GM12878 (cell line): ENCODE measurements at regions of chr10 and their contacts with region 1.

Region 1: GRCh38 chr10:95374597-95375209 is 83.9 kb upstream of the PDLIM1 start:
- DNase-seq: no peak
- ATAC-seq: peak; percentile 99
- H3K4me3 ChIP-seq: no peak overlapping the region
- H3K27ac ChIP-seq: no peak overlapping the region
- H3K4me1 ChIP-seq: peaks cover 16% of the 10 kb centered on the region
- H3K27me3 ChIP-seq: peaks cover 0 to 3% of the 10 kb centered on the region in 2 experiments; a peak in 1 of 4 replicates
- CTCF ChIP-seq: peak; percentile 94 to 96 (median 96)
- EP300 ChIP-seq: no peak
- POLR2A ChIP-seq: no peak
- RAD21 ChIP-seq: peak; percentile 97

Region 2: DNA sequence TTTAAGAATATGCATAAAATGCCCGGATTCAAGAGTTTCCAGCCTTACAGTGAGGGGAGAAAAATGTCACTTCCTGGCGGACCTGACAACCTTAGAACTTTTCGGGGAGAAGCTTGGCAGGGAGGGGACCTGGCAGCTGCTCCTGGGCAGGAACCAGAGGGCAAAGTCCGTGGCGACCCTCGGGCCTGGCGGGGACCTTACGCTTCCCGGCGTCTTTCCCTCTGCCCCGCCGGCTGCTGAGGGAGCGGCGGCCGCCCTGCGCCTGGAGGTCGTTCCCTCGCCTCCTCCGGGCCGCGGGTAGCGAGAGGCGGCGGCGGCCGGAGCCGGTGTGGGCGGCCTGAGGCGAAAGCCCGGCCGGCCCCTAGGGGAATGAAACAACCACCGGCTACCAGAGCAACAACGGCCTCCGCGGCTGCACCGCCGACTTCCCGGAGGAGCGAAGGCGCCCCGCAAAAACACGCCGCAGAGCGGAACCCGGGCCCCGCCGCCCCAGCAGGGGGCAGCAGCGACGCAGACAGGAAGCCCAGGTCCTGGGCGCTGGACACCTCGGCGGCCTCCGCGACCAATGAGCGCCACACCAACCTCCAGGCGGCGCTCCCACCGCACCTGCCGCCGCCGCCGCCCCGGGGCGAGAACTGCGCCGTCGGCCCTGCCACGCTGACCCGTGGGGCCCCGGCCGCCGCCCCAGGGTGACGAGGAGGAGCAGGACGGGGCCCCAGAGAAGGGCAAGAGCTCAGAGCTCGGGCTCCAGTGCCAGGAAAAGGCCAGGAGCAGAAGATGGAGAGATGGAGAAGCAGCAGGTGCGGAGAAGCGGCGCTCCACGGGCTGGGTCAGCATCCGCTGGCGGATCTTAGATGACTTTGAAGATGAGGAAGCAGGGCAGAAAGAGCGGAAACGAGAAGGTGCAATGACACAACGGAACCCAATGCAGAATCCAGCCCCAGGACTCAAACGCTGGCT is 191.2 kb before region 1 on chr10:
- CTCF ChIA-PET with region 1: interaction called, 13 read pairs
- POLR2A ChIA-PET with region 1: no interaction called
- RAD21 ChIA-PET with region 1: interaction called, 3 read pairs
- SMC1A ChIA-PET with region 1: interaction called, 4 read pairs
- in situ Hi-C with region 1: no loop called
- intact Hi-C with region 1: no loop called
- DNase-seq: peak; percentile 27
- ATAC-seq: peak; percentile 99
- H3K4me3 ChIP-seq: peak overlapping the region; percentile 69
- H3K27ac ChIP-seq: no peak overlapping the region
- H3K4me1 ChIP-seq: no peaks in the 10 kb centered on the region
- H3K27me3 ChIP-seq: no peaks in the 10 kb centered on the region
- CTCF ChIP-seq: peak; percentile 84 to 98 (median 92)
- EP300 ChIP-seq: 0 out of 4 replicates have a peak, but pooled peaks of 1 of the 2 experiments have one; percentile 17
- POLR2A ChIP-seq: peak; percentile 69
- RAD21 ChIP-seq: peak; percentile 67

Region 3: DNA sequence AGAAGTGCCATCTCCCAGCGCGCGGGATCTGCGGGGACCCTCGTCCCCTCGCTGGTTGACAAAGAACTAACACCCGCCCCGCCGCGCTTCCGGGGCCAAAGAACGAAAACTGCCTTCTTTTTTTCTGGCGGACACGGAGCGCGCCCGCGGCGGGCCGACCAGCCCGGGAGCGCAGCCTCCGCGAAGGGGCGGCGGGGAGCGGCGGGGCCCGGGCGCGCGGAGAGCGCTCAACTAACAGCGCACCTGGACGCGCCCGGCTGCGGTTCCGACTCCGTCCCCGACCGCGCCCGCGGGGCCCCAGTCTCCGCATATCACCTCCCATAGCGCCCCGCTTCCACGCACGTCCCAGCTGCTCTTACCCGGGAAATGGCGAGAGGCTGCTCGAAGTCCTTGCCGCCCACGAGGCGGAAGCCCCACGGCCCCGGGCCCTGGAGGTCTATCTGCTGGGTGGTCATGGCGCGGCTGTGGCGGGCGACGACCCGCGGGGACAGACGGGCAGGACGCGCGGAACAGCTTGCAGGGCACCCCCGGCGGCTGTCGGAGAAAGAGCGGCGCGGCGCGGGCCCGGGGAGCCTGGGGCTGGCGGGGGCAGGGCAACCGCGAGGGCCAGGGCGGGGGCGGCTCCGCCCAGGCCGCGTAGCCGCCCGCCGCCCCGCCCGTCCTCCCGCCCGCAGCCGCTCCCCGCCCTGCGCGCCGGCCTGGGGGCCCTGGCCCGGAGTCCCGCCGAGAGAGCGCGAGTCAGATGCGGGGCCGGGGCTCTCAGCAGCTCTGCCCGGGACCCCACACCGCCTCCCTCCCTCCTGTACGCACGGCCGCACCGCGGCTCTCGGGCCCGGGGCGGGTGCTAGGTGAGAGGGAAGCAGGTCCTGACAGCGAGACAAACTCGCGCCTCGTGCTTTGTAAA is 84.0 kb before region 1 on chr10 and contains the start of gene PDLIM1:
- CTCF ChIA-PET with region 1: interaction called, 9 read pairs
- POLR2A ChIA-PET with region 1: interaction called, 9 read pairs
- RAD21 ChIA-PET with region 1: interaction called, 7 read pairs
- SMC1A ChIA-PET with region 1: interaction called, 14 read pairs
- in situ Hi-C with region 1: no loop called
- intact Hi-C with region 1: no loop called
- DNase-seq: no peak
- ATAC-seq: peak; percentile 55
- H3K4me3 ChIP-seq: peak within 1 kb of the TSS; percentile 97
- H3K27ac ChIP-seq: peak within 1 kb of the TSS; percentile 98
- H3K4me1 ChIP-seq: peaks cover 47% of the 10 kb centered on the region
- H3K27me3 ChIP-seq: no peaks in the 10 kb centered on the region
- CTCF ChIP-seq: peak; percentile 21 to 30 (median 27); a peak in 5 of 6 replicates
- EP300 ChIP-seq: no peak
- POLR2A ChIP-seq: peak; percentile 96
- RAD21 ChIP-seq: no peak
- polyA plus RNA-seq, gene PDLIM1: 133 to 338 TPM

Region 4: GRCh38 chr10:95334805-95335144 is 39.9 kb before region 1 on chr10:
- CTCF ChIA-PET with region 1: no interaction called
- POLR2A ChIA-PET with region 1: no interaction called
- RAD21 ChIA-PET with region 1: no interaction called
- SMC1A ChIA-PET with region 1: no interaction called
- in situ Hi-C with region 1: no loop called
- intact Hi-C with region 1: no loop called
- DNase-seq: no peak
- ATAC-seq: no peak
- H3K4me3 ChIP-seq: no peak overlapping the region
- H3K27ac ChIP-seq: no peak overlapping the region
- H3K4me1 ChIP-seq: peaks cover 4% of the 10 kb centered on the region; the same call in 1 of the 2 replicates
- H3K27me3 ChIP-seq: no peaks in the 10 kb centered on the region
- CTCF ChIP-seq: no peak
- EP300 ChIP-seq: no peak
- POLR2A ChIP-seq: no peak
- RAD21 ChIP-seq: no peak

Region 5: DNA sequence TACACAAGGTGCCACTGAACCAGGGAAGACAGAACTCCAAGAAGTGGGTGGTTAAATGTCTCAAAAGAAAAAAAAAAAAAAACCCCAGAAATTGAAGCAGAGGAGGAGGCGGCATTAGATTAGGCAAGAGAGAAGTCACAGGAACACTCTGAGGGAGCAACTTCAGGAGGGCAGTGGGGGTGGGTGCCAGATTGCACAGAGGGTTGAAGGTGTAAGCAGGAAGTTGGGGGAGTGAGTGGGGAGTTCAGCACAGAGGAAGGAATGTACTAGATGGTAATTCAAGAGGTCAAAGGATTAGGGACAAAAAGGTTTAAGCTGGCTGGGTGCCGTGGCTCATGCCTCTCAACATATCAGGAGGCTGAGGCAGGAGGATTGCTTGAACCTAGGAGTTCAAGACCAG is 26.1 kb after region 1 on chr10:
- CTCF ChIA-PET with region 1: interaction called, 74 read pairs
- POLR2A ChIA-PET with region 1: no interaction called
- RAD21 ChIA-PET with region 1: interaction called, 17 read pairs
- SMC1A ChIA-PET with region 1: interaction called, 153 read pairs
- in situ Hi-C with region 1: no loop called
- intact Hi-C with region 1: no loop called
- DNase-seq: no peak
- ATAC-seq: no peak
- H3K4me3 ChIP-seq: no peak overlapping the region
- H3K27ac ChIP-seq: no peak overlapping the region
- H3K4me1 ChIP-seq: peaks cover 13% of the 10 kb centered on the region
- H3K27me3 ChIP-seq: no peaks in the 10 kb centered on the region; a peak in 1 of 4 replicates
- CTCF ChIP-seq: no peak
- EP300 ChIP-seq: no peak
- POLR2A ChIP-seq: no peak
- RAD21 ChIP-seq: no peak

Region 6: DNA sequence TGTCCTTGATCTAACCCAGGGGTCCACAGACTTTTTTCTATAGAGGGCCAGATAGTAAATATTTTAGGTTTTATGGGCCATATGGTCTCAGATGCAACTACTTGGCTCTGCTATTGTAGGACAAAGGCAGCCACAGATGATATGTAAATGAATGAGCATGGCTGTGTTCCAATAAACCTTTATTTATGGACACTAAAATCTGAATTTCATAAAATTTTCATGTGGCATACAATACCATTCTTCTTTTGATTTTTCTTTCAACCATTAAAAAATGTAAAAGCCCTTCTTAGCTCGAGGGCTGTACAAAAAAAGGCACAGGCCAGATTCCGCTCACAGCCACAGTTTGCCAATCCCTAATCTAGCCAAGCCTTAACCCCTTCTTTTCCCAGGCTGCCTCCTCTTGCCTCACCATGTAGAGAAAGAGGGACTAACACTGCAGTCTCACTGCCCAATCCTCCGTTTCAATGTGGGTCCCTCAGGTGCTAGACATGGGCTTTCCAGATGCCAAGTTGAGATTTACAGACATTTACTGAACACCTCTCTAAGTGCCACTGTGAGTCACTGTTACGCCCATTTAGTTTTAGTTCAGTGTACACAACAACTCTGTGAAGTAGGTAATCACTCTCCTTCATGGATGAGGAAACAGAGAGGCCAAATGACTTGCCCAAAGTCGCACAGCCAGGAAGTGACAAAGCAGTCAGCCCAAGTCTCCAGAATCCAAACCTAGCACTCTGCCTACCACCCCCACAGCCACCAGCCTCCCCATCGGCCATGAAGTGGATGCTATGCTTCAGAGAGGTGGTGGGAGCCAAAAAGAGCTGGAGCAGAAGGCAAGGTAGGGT is 48.7 kb after region 1 on chr10:
- CTCF ChIA-PET with region 1: interaction called, 26 read pairs
- POLR2A ChIA-PET with region 1: interaction called, 3 read pairs
- RAD21 ChIA-PET with region 1: interaction called, 29 read pairs
- SMC1A ChIA-PET with region 1: interaction called, 81 read pairs
- in situ Hi-C with region 1: no loop called
- intact Hi-C with region 1: no loop called
- DNase-seq: no peak
- ATAC-seq: peak; percentile 72
- H3K4me3 ChIP-seq: no peak overlapping the region
- H3K27ac ChIP-seq: no peak overlapping the region
- H3K4me1 ChIP-seq: peaks cover 5% of the 10 kb centered on the region; the same call in 1 of the 2 replicates
- H3K27me3 ChIP-seq: no peaks in the 10 kb centered on the region; a peak in 2 of 4 replicates
- CTCF ChIP-seq: no peak
- EP300 ChIP-seq: no peak
- POLR2A ChIP-seq: no peak
- RAD21 ChIP-seq: no peak

Region 7: DNA sequence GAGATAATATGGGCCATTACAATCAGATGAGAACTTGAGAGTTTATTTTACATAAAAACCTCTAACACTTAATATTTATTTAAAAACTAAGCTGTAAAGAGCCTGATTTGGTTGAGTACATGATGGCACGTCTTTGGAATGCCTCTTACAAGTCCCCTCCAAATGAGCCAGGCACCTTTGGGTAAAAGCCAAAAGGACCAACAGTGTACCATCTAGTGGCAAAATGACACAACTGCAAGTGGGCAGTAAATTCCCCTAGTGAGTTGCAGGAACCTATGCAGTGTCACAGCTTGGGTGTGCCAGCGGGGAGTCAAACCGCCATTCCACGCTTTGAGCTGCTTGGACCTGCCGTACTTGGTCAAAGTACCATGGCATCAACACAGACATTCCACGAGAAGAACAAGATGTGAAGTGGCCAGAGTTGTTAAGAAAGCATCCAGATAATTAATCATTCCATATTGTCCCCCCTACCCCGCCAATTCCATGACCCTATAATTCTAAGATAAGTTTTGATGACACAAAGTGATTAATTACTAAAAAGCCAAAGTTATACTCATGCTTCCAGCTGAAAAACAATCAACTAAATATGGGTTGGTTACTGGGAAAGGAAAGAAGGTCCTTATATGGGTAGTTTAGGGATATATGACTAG is 71.3 kb after region 1 on chr10:
- CTCF ChIA-PET with region 1: interaction called, 204 read pairs
- POLR2A ChIA-PET with region 1: interaction called, 4 read pairs
- RAD21 ChIA-PET with region 1: interaction called, 59 read pairs
- SMC1A ChIA-PET with region 1: interaction called, 122 read pairs
- in situ Hi-C with region 1: no loop called
- intact Hi-C with region 1: loop called (anchors 1 kb)
- DNase-seq: no peak
- ATAC-seq: peak; percentile 83
- H3K4me3 ChIP-seq: no peak overlapping the region
- H3K27ac ChIP-seq: no peak overlapping the region
- H3K4me1 ChIP-seq: peaks cover 7% of the 10 kb centered on the region
- H3K27me3 ChIP-seq: no peaks in the 10 kb centered on the region; a peak in 2 of 4 replicates
- CTCF ChIP-seq: peak; percentile 85 to 86 (median 86)
- EP300 ChIP-seq: no peak
- POLR2A ChIP-seq: no peak
- RAD21 ChIP-seq: peak; percentile 77

Region 8: DNA sequence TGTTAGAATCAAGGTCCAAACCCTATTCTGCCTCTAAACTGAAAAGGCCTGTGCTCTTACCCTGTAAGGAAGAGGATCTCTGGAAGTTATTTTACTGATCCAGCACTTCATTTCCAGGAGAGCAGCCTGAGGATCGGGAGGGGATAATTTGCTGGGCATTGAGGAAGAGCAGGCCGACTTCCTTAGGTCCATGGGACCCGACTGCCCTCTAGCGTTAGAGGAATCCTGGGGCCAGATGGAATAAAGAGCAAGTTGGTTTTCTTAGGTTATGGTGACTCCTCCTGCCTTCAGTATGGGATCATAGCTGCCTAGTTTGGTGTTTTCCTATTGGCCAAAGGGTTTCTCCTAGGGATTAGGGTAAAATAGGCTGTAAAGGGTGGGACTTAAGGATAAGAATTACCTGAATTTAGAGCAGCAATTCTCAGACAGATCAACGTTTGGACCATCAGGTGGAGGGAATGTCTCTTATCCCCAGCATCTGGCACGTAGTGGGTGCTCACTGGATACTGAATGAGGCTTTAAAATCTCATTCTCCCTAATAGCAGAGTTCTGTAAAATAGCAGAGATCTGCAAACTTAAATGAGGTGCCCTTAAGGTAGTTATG is 226.5 kb after region 1 on chr10:
- CTCF ChIA-PET with region 1: interaction called, 177 read pairs
- POLR2A ChIA-PET with region 1: no interaction called
- RAD21 ChIA-PET with region 1: interaction called, 84 read pairs
- SMC1A ChIA-PET with region 1: interaction called, 47 read pairs
- in situ Hi-C with region 1: loop called (anchors 5 kb)
- intact Hi-C with region 1: loop called (anchors 1 kb)
- DNase-seq: peak; percentile 5
- ATAC-seq: peak; percentile 94
- H3K4me3 ChIP-seq: no peak overlapping the region
- H3K27ac ChIP-seq: no peak overlapping the region
- H3K4me1 ChIP-seq: no peaks in the 10 kb centered on the region
- H3K27me3 ChIP-seq: peaks cover 0 to 3% of the 10 kb centered on the region in 2 experiments; a peak in 2 of 4 replicates
- CTCF ChIP-seq: peak; percentile 92 to 95 (median 94)
- EP300 ChIP-seq: no peak
- POLR2A ChIP-seq: no peak
- RAD21 ChIP-seq: peak; percentile 95